ENCODE measurements at regions of chr20 and their contacts with region 1.

Region 1: DNA sequence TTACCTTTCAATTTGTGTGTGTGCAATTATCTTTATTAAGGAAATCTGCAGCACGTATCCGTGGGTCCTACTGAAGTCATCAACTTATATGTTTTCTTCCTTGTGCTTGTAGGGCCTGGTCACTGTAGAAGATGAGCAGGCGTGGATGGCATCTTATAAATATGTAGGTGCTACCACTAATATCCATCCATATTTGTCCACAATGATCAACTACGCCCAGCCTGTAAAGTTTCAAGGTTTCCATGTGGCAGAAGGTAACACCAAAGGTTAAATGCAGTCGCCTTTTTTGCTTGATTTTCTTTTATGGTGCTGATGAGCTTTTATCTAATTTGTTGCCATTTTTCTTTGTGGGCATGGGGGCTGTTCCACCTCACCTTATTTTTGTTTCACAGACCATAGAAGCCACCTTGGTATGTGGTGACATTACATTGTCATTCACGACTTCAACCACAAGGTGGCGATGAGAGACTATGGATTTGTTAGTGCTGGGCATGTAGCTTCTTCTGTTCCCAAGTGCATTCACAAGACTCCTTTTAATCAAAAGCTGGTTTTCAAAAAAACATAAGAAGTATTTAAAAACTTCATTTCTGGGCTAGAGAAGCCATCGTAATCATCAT is 106.5 kb upstream of the LAMP5 start:
- DNase-seq: no peak
- ATAC-seq: peak; percentile 61
- H3K4me3 Mint-ChIP-seq: no peak overlapping the region
- H3K27ac Mint-ChIP-seq: no peak overlapping the region
- H3K4me1 Mint-ChIP-seq: peaks cover 9% of the 10 kb centered on the region
- H3K27me3 Mint-ChIP-seq: peaks cover 3% of the 10 kb centered on the region
- CTCF ChIP-seq: peak; percentile 63

Region 2: DNA sequence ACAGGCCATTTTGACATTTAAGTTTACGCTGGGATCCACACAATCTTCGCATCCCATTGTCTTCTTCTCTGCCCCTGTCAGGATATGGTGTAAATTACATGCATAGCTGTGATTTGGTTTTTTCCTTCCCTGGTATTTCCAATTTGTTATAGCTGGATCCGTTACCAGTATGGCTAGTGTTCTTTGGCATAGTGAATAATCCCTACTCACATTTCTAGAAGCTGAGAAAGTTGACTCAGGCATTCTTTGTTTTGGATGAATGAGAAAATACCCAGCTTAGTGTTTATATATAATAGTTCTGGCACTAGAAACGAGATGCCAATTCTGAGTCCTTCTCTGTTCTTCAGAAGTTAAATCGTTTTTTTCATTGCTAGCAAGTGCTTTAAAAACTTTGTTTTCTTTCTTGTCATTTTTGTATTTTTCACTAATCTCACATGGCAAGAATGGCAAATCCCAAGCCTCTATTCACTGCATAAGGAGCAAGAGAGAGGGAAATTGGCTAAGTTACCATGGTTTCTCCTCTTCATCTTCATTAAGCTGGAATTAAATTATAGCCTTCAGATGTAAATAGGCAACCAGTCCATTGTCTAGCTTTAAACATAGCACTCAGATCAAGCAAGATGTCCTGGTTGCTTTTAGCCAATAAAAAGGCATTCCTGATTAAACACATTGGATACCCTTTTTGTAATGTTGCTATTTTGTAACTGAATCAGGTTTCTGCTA is 14.6 kb after region 1 on chr20:
- CTCF ChIA-PET with region 1: interaction called, 13 read pairs
- POLR2A ChIA-PET with region 1: no interaction called
- intact Hi-C with region 1: no loop called
- DNase-seq: no peak
- ATAC-seq: no peak
- H3K4me3 Mint-ChIP-seq: no peak overlapping the region
- H3K27ac Mint-ChIP-seq: no peak overlapping the region
- H3K4me1 Mint-ChIP-seq: no peaks in the 10 kb centered on the region
- H3K27me3 Mint-ChIP-seq: no peaks in the 10 kb centered on the region
- CTCF ChIP-seq: no peak

Region 3: DNA sequence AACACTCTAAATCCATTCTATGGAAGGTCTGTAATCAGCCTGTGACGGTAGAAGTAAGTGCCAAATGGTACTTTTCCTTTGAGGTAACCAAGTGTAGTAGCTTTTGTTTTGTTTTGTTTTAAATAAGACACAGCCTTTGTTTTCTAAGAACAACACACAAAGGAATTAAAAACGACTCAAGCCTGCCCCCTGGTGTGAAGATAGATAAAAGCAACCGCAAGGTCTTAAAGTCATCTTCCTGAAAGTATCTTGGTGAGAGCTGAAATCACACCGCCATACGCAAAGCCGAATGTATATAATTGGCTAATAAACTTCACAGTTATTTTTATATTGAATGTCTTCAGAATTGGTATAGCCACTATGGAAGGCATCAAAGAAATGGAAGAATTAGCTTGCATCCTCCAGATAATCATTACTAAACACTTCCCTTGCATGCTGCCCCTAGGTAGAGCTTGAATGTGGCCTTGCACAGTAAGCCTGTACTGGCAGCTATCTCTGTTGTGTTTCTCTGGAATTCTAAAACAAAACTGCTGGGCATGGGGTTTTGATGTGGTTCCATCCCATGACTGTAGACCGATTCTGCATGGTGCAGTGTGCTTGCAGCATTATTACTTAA is 202.1 kb after region 1 on chr20:
- CTCF ChIA-PET with region 1: interaction called, 81 read pairs
- POLR2A ChIA-PET with region 1: no interaction called
- intact Hi-C with region 1: loop called (anchors 1 kb)
- DNase-seq: no peak
- ATAC-seq: no peak
- H3K4me3 Mint-ChIP-seq: no peak overlapping the region
- H3K27ac Mint-ChIP-seq: no peak overlapping the region
- H3K4me1 Mint-ChIP-seq: no peaks in the 10 kb centered on the region
- H3K27me3 Mint-ChIP-seq: peaks cover 2% of the 10 kb centered on the region
- CTCF ChIP-seq: no peak

Region 4: DNA sequence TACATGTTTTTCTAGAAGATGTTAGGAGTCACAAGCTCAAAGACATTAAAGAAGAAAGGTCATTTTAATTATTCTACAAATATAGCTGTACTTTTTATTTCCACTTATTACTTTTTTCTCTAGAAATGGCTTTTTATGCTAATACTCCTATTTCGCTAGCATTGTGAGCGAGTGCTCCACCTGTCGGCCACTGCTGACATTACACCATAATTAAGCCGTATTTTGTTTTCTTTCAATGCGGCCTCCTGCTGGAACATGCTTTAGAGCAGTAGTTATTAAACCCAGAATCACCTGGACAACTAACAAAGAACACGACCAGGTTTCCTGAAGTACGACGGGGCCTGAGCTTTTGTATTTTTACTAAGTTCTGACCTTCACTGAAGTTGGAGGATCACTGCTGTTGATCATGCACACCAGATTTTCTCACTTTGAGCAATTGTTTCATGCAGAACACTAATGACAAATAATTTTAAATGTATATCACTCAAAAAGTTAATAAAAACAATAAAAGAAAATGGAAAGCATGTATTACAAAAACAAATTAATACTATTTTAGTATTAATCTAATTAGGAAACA is 505.0 kb after region 1 on chr20:
- CTCF ChIA-PET with region 1: interaction called, 11 read pairs
- POLR2A ChIA-PET with region 1: no interaction called
- intact Hi-C with region 1: loop called (anchors 1 kb)
- DNase-seq: no peak
- ATAC-seq: no peak
- H3K4me3 Mint-ChIP-seq: no peak overlapping the region
- H3K27ac Mint-ChIP-seq: no peak overlapping the region
- H3K4me1 Mint-ChIP-seq: no peaks in the 10 kb centered on the region
- H3K27me3 Mint-ChIP-seq: peaks cover 18% of the 10 kb centered on the region
- CTCF ChIP-seq: no peak

Region 5: GRCh38 chr20:10090588-10091166 is 682.8 kb after region 1 on chr20:
- CTCF ChIA-PET with region 1: interaction called, 15 read pairs
- POLR2A ChIA-PET with region 1: no interaction called
- intact Hi-C with region 1: no loop called
- DNase-seq: no peak
- ATAC-seq: peak; percentile 47
- H3K4me3 Mint-ChIP-seq: no peak overlapping the region
- H3K27ac Mint-ChIP-seq: no peak overlapping the region
- H3K4me1 Mint-ChIP-seq: no peaks in the 10 kb centered on the region
- H3K27me3 Mint-ChIP-seq: peaks cover 2% of the 10 kb centered on the region
- CTCF ChIP-seq: no peak

Region 6: DNA sequence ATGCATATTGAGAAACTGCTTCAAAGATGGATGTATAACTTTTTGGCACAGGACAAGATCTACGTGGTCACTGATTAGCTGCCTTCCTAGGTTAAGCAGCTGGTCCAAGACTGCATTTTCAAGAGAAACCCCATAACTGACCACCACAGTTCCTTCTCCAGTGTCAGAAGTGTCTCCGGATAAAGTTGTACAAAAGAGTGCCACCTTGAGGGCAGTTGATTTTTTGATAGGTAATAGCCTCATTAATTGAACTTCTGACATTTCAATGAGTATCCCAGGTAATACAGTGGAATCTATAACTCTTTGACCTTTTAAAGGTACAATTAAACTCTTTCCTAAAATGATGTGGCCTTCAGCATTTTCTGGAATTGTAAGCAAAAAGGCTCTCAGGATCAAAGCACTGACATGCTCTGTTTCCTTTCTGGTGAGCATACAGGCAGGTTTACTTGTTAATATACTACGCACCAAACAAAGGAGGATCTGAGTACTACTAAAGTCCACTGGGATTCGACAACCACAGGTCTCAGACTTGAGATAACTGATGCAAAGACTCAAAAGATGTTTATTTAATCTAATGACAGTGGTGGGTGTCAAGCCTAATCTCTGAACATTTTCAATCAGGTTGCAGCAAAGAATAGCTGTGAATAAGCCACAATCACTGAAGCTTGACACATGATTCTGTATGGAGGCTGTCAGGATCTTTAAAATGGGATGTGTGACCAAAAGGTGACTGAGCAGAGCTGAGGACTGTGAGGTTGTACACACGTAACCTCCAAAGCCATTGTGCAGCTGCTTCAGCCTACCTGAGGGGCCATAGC is 1004.9 kb after region 1 on chr20:
- CTCF ChIA-PET with region 1: no interaction called
- POLR2A ChIA-PET with region 1: no interaction called
- intact Hi-C with region 1: loop called (anchors 5 kb)
- DNase-seq: no peak
- ATAC-seq: peak; percentile 52
- H3K4me3 Mint-ChIP-seq: no peak overlapping the region
- H3K27ac Mint-ChIP-seq: no peak overlapping the region
- H3K4me1 Mint-ChIP-seq: peaks cover 18% of the 10 kb centered on the region
- H3K27me3 Mint-ChIP-seq: no peaks in the 10 kb centered on the region
- CTCF ChIP-seq: no peak

Region 7: DNA sequence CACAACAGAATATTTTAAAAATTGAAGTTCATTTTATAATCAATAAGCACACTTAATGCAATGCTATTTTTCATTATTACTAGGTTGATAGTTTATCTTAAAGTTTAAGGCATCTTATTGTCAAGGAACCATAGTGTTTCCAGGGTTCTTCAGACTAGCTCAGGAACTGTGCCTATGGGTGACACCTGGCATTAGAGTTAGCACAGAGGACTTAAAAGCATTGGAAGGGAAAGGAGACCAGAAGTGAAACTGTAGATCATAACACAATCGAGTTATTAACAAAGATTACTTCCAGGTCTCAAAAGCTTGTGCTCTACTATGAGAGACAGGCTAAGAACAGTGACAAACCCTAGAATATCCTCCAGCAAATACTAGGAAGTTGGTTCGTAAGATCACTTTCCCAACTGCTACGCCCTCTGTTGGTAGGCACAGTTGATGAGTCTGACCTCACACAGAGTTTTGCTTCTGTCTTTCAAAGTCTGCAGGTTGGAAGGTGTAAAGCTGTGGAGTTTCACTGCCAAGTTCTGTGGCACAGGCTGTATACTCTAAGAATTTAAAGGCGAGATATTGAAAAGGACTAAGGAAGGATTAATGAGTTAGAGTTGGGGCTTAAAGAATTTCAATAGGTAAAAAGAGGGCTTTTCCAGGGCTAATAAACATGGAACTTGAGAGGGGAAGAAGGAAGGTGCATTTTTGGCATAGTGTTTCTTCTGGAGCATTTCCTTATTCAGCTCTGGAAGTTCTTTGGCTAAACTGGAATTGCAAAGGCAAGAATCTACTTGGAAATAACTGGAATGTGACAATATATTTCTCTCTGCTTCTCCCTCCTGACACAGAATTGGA is 1797.2 kb after region 1 on chr20:
- CTCF ChIA-PET with region 1: no interaction called
- POLR2A ChIA-PET with region 1: no interaction called
- intact Hi-C with region 1: loop called (anchors 5 kb)
- DNase-seq: no peak
- ATAC-seq: no peak
- H3K4me3 Mint-ChIP-seq: no peak overlapping the region
- H3K27ac Mint-ChIP-seq: no peak overlapping the region
- H3K4me1 Mint-ChIP-seq: no peaks in the 10 kb centered on the region
- H3K27me3 Mint-ChIP-seq: no peaks in the 10 kb centered on the region
- CTCF ChIP-seq: no peak

Measured in activated B cell treated with CpG ODN at 0.5 μM for 24 hours (primary cell).